Heart left ventricle (tissue), 16 donors: ENCODE measurements at regions of chr7 and their contacts with region 1.

Region 1: DNA sequence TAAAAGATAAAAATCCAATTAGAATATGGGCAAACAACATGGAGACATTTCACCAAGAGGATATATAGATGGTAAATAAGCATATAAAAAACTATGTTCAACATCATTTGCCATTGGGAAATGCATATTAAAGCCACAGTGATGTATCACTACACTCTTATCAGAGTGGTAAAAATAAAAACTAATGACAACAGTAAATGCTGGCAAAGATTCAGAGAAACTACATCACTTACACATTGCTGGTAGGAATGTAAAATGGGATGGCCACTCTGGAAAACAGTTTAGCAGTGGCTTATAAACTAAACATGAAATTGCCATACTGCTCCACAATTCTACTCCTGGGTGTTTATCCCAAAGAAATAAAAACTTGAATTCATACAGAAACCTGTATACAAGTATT is 59.2 kb downstream of the CROT start:
- DNase-seq: no peak
- ATAC-seq: peak in 2 of 4 donors; percentile 46
- H3K4me3 ChIP-seq: no peak overlapping the region
- H3K27ac ChIP-seq: no peak overlapping the region
- H3K4me1 ChIP-seq: no peaks in the 10 kb centered on the region
- H3K27me3 ChIP-seq: no peaks in the 10 kb centered on the region
- CTCF ChIP-seq: no peak
- POLR2A ChIP-seq: no peak

Region 2: DNA sequence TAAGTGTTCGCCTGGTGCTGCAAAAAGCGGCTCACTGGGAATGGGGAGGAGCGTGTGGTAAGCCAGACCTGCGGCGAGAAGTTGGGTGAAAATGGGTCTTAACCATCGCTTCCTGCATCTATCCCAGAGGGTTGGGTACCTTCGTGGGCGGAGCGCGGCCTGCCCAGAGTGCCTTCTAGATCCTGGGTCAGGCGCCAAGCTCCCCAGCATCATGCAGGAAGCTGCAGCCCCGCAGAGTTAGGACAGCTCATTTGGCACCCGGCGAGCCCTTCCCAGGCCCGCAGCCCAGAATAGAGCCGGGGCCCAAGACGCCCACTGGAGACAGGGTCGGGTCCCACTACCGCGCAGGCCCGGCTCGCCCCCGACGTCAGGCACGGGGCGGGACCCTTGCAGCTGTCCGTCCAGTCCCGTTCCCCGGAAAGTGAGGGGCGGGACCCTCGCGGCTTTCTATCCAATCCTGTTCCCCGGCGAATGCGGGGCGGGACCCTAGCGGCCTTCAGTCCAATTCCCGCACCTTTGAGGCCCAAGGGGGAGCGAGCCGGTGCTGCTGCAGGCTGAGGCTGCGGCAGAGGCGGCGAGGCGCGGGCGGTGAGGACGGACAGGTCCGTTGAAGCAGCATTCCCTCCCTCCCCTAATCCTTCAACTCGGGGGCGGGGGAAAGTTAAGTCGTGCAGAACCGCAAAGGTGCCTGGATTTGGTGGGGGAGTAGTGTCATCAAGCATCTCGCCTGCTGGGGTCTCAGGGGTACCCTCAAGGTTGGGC is 59.3 kb before region 1 on chr7 and contains the start of gene CROT:
- intact Hi-C with region 1: loop called in 1 of 10 experiments (anchors 5 kb)
- DNase-seq: peak; percentile 97 to 99 (median 98)
- ATAC-seq: peak; percentile 100
- H3K4me3 ChIP-seq: peak within 1 kb of the TSS; percentile 48 to 92 (median 73)
- H3K27ac ChIP-seq: peak within 1 kb of the TSS; percentile 29 to 92 (median 84)
- H3K4me1 ChIP-seq: peaks cover 0 to 33% (median 13%) of the 10 kb centered on the region in 12 donors
- H3K27me3 ChIP-seq: no peaks in the 10 kb centered on the region
- CTCF ChIP-seq: peak in 2 of 12 donors; percentile 2 to 12
- POLR2A ChIP-seq: peak in 1 of 2 donors; percentile 92
- total RNA-seq, gene CROT: 6.8 to 10.2 (median 9.1) TPM

Region 3: DNA sequence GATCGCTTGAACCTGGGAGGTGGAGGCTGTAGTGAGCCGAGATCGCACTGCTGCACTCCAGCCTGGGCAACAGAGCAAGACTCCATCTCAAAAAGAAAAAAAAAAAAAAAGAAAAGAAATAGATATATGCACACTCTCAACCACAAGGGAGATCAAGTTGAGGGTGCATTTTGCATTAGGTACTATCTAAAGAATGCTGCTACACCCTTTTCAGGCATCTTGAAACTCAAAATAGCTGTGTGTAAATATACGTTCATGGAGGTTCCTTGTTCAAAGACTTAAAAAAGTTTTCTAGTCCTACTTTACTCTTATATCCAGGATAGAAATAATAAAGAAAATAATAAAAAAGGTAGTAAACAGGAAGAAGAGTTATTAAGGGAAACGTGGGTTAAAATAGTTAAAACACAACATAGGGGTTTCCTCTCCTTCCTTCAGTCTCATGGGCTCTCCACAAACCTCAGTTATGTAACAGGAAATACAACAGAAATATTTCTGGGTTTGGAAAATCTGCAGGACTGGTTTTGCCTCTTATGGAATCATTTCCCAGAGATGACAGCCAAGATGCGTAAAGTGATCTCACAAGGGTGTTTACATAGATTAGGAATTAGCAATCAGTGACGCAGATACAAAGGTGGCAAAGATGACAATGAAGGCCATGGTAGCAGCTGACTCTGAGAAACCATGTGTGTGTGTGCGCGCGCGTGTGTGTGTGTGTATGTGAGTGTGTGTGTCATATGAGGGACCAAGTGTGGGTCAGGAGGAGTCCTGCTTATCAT is 886.9 kb after region 1 on chr7:
- intact Hi-C with region 1: no loop called
- DNase-seq: no peak
- ATAC-seq: peak in 1 of 4 donors; percentile 31
- H3K4me3 ChIP-seq: no peak overlapping the region
- H3K27ac ChIP-seq: peak overlapping the region in 1 of 12 donors; percentile 31
- H3K4me1 ChIP-seq: peaks cover 0 to 3% (median 0%) of the 10 kb centered on the region in 12 donors
- H3K27me3 ChIP-seq: no peaks in the 10 kb centered on the region
- CTCF ChIP-seq: no peak
- POLR2A ChIP-seq: no peak